GM12878 (cell line): ENCODE measurements at regions of chr10 and their contacts with region 1.

Region 1: GRCh38 chr10:117431160-117431559 is 55.9 kb upstream of the PDZD8 start:
- DNase-seq: no peak
- ATAC-seq: peak; percentile 41; the same call in 2 of the 3 replicates
- H3K4me3 ChIP-seq: no peak overlapping the region
- H3K27ac ChIP-seq: no peak overlapping the region
- H3K4me1 ChIP-seq: no peaks in the 10 kb centered on the region
- H3K27me3 ChIP-seq: peaks cover 0 to 2% of the 10 kb centered on the region in 2 experiments; a peak in 2 of 4 replicates
- CTCF ChIP-seq: peak in 1 of 3 experiments; percentile 25; a peak in 1 of 6 replicates
- EP300 ChIP-seq: no peak
- POLR2A ChIP-seq: no peak
- RAD21 ChIP-seq: no peak

Region 2: DNA sequence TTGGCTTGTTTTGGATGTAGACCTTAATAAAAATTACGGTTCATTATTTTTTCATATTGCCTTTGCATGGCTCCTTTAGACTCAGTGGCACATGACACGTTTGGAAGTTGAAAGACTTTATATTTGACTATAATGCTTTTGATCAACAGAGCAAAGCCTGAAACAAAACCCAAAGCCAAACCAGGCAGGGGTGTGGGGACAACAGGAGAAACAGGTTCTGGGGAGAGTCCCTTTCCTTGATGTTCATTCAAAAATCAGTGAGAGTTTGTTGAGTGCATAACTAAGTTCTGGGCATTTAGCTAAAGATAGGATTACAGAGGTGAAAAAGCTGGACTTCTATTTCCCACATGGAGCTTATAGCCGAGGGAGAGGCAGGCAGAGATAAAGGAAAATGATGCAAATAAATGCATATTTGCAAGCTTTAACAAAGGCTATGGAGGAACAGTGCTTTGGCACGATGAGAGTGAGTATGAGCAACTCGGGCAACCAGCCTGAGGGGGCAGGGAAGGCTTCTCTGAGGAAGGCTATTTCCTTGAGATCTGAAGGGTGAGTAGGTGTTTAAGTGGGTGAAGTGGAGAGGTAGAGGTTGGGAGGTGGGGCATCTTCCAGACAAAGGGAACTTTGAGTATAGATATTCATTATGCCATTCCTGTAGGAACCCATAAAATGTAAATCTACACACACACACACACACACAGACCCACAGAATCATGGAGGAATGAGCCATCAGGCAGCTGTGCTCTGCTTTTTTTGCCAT is 21.4 kb before region 1 on chr10:
- CTCF ChIA-PET with region 1: interaction called, 3 read pairs
- POLR2A ChIA-PET with region 1: interaction called, 4 read pairs
- RAD21 ChIA-PET with region 1: interaction called, 3 read pairs
- SMC1A ChIA-PET with region 1: interaction called, 11 read pairs
- in situ Hi-C with region 1: no loop called
- intact Hi-C with region 1: no loop called
- DNase-seq: no peak
- ATAC-seq: no peak
- H3K4me3 ChIP-seq: no peak overlapping the region
- H3K27ac ChIP-seq: no peak overlapping the region
- H3K4me1 ChIP-seq: no peaks in the 10 kb centered on the region
- H3K27me3 ChIP-seq: peaks cover 0 to 2% of the 10 kb centered on the region in 2 experiments; a peak in 1 of 4 replicates
- CTCF ChIP-seq: no peak
- EP300 ChIP-seq: no peak
- POLR2A ChIP-seq: no peak
- RAD21 ChIP-seq: no peak

Region 3: DNA sequence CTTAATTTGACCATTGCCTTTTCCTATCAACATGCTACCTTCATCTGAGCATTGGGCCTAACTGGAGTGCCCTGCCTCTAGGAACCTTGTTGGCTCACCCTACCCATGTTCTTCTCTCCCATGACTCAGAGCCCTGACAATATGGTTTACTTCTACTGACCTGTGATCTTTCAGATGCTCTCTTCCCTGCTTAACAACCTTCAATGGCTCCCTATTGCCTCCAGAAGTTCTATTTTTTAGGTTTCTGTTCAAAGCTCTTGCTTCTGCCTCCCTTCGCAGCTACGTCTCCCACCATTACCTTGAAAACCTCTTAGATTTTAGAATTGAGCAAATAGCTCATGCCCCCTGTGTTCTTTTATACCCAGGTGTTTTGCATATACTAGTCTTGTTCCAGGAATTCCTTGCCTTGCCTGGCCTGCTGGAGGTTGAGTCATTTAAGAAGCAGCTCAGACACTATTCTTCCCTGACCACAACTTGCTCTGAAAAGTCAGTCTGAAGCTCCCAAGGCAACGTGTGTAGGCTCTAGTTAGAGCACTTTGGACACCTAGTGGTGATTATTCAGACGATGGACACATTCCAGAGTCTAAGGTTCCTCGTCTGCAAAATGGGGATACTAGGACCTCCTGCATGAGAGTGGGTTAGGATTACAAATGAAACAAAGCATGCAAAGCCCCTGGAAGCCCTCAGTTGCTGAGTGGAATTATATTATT is 47.0 kb after region 1 on chr10:
- CTCF ChIA-PET with region 1: interaction called, 26 read pairs
- POLR2A ChIA-PET with region 1: no interaction called
- RAD21 ChIA-PET with region 1: no interaction called
- SMC1A ChIA-PET with region 1: interaction called, 12 read pairs
- in situ Hi-C with region 1: no loop called
- intact Hi-C with region 1: no loop called
- DNase-seq: no peak
- ATAC-seq: 0 out of 3 replicates have a peak, but pooled peaks have one; percentile 7
- H3K4me3 ChIP-seq: no peak overlapping the region
- H3K27ac ChIP-seq: no peak overlapping the region
- H3K4me1 ChIP-seq: 0 out of 2 replicates have a peak, but pooled peaks cover 4% of the 10 kb centered on the region
- H3K27me3 ChIP-seq: no peaks in the 10 kb centered on the region; a peak in 1 of 4 replicates
- CTCF ChIP-seq: peak in 2 of 3 experiments; percentile 8 to 10; a peak in 1 of 6 replicates
- EP300 ChIP-seq: no peak
- POLR2A ChIP-seq: no peak
- RAD21 ChIP-seq: no peak